ENCODE measurements at regions of chr15 and their contacts with region 1.

Region 1: DNA sequence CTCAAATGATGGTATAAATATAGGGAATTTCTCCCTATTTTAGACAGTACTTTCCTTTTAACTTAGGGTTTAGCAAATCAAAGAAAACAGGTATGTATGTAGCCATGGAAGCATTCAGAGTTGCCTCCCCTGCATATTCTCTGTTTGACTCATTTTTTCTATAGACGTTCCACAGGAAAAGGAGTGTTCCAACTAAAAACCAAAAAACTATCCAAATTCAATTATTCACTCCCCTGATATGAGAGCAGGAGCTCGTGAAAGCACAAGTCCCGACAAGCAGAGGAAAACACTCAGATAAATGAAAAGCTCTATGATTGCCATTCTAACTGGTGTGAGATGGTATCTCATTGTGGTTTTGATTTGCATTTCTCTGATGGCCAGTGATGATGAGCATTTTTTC is 119.5 kb downstream of the FRMD5 start:
- DNase-seq: peak; percentile 94
- H3K4me3 ChIP-seq: peak overlapping the region in 1 of 3 experiments; percentile 17
- H3K27ac ChIP-seq: peak overlapping the region; percentile 99
- H3K4me1 ChIP-seq: peaks cover 20% of the 10 kb centered on the region
- H3K27me3 ChIP-seq: no peaks in the 10 kb centered on the region
- CTCF ChIP-seq: no peak

Region 2: GRCh38 chr15:44102675-44103254 is 27.2 kb after region 1 on chr15:
- CTCF ChIA-PET with region 1: no interaction called
- dilution Hi-C with region 1: no loop called
- in situ Hi-C with region 1: no loop called
- intact Hi-C with region 1: loop called (anchors 1 kb)
- DNase-seq: peak; percentile 94
- H3K4me3 ChIP-seq: no peak overlapping the region
- H3K27ac ChIP-seq: peak overlapping the region; percentile 96
- H3K4me1 ChIP-seq: peaks cover 39% of the 10 kb centered on the region
- H3K27me3 ChIP-seq: no peaks in the 10 kb centered on the region
- CTCF ChIP-seq: no peak

Measured in mammary epithelial cell (primary cell).